ENCODE measurements at regions of chr12 and their contacts with region 1.

Region 1: DNA sequence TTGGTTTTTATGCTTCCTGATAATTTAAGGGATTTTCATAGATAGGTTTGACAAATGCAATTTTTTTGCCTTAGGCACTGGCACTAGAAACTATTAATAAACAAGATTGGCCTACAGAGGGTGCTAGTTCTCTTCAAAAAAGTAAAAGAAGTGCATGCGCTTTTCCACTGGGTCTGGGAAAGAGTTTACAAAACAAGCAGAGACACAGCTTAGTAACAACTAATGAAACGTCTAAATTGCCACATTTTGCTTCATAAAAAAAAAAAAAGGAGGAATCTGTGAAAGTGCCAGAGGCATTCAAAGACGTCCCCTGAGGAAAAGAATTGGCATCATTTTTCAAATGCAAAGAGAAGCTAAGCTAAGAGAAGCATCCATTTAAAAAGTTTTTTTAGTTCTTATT is 58.3 kb upstream of the EEA1 start:
- DNase-seq: no peak
- ATAC-seq: peak; percentile 80 to 96 (median 88)
- H3K4me3 ChIP-seq: peak overlapping the region; percentile 23
- H3K27ac ChIP-seq: peak overlapping the region; percentile 72
- H3K4me1 ChIP-seq: peaks cover 12% of the 10 kb centered on the region
- H3K27me3 ChIP-seq: no peaks in the 10 kb centered on the region
- CTCF ChIP-seq: peak; percentile 63

Region 2: DNA sequence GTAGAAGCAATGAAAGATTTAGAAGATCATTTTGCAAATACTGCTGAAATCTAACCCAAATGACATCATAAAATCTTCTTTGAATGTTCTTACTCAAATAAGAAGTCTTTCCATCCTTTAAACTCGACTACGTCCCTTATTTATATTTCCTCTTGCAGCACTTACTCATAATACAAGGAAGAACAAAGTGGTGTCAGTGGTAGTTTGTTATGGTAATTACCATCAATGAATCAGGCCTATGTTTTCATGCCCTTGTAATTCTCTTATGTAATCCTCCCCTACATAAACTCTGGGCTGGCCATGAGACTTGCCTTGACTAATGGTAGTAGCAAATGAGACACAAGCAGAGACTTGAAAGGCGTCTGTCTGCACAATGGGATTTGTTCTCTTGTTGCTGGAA is 75.3 kb before region 1 on chr12:
- intact Hi-C with region 1: no loop called
- DNase-seq: no peak
- ATAC-seq: peak; percentile 66 to 82 (median 70)
- H3K4me3 ChIP-seq: no peak overlapping the region
- H3K27ac ChIP-seq: no peak overlapping the region
- H3K4me1 ChIP-seq: peaks cover 42% of the 10 kb centered on the region
- H3K27me3 ChIP-seq: no peaks in the 10 kb centered on the region
- CTCF ChIP-seq: no peak

Region 3: DNA sequence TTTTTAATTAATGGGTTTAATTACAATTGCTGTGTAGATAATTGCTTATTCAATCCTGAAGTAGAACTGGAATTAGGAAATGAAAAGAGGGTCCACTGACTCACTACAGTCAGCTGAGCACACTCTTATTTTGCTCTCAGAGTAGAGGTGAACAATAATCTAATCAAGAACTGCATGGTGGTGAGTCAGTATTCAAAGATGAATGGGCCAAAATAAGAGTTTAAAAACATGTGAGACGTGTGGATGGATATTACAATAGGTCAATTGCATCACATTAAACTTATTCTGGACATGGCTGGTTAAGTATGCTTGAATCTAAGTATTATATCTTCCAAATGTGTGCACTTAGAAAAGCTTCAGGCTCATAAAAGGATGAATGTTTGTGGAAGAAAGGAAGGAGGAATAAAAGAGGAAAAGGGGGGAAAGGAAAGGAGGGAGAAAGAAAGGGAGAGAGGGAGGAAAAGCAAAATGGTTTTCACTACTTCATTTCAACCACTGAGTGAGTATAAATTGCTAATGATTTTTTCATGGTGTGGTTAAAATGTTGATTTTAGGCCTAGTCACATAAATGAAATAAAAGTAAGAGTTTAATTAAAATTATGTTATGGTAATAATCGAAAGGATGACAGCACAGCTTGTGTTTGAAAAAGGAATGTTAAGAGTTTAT is 31.2 kb before region 1 on chr12:
- intact Hi-C with region 1: no loop called
- DNase-seq: no peak
- ATAC-seq: no peak
- H3K4me3 ChIP-seq: no peak overlapping the region
- H3K27ac ChIP-seq: no peak overlapping the region
- H3K4me1 ChIP-seq: no peaks in the 10 kb centered on the region
- H3K27me3 ChIP-seq: no peaks in the 10 kb centered on the region
- CTCF ChIP-seq: no peak

Region 4: DNA sequence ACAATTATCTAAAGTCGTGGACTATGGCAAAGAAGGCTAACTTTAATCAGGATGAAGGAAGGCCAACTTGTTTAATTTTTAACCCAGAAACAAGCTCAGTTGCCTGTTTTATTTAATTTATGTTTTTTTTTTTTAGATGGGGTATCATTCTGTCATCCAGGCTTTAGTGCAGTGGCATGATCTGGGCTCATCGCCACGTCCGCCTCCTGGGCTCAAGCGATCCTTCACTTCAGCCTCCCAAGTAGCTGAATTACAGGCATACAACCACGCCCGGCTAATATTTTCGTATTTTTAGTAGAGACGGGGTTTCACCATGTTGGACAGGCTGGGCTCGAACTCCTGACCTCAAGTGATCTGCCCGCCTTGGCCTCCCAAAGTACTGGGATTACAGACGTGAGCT is 410.1 kb after region 1 on chr12:
- intact Hi-C with region 1: loop called in 1 of 2 experiments (anchors 2 kb)
- DNase-seq: no peak
- ATAC-seq: no peak
- H3K4me3 ChIP-seq: no peak overlapping the region
- H3K27ac ChIP-seq: peak overlapping the region; percentile 53
- H3K4me1 ChIP-seq: peaks cover 25% of the 10 kb centered on the region
- H3K27me3 ChIP-seq: no peaks in the 10 kb centered on the region
- CTCF ChIP-seq: no peak

Region 5: GRCh38 chr12:93407054-93407962 is 419.9 kb after region 1 on chr12:
- intact Hi-C with region 1: loop called in 1 of 2 experiments (anchors 5 kb)
- DNase-seq: no peak
- ATAC-seq: peak in 1 of 4 donors; percentile 26
- H3K4me3 ChIP-seq: no peak overlapping the region
- H3K27ac ChIP-seq: peak overlapping the region; percentile 18
- H3K4me1 ChIP-seq: peaks cover 32% of the 10 kb centered on the region
- H3K27me3 ChIP-seq: no peaks in the 10 kb centered on the region
- CTCF ChIP-seq: no peak

Region 6: DNA sequence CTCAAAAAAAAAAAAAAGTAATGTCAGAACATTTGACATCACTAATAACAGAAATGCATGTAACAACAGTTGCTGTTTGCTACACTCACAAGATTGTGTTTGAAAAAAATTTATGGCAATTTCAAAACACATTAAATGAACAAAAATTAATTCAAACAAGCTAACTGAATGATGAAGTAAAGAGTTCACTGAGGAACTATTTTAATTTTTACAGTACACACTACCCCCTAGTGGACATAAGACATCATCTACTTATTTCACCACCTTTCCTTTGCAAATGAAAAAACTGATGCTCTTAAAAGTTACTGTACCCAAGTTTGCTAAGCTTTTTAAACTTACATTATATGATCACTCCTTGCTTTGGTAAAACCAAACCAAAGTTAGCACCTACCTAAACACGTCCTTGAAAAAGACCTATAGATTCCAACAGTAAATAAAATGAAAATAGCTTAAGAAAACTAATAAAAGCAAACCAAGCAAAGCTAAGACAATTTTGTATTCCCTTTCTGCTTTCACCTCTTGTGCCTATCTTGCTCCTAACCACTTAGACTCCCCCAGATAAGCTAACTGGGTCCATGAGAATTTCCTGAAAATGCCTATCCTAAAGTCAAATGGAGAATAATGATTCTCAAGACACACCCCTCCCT is 432.1 kb after region 1 on chr12:
- intact Hi-C with region 1: loop called in 1 of 2 experiments (anchors 2 kb)
- DNase-seq: no peak
- ATAC-seq: peak; percentile 61 to 79 (median 72)
- H3K4me3 ChIP-seq: peak overlapping the region; percentile 13
- H3K27ac ChIP-seq: peak overlapping the region; percentile 76
- H3K4me1 ChIP-seq: peaks cover 81% of the 10 kb centered on the region
- H3K27me3 ChIP-seq: no peaks in the 10 kb centered on the region
- CTCF ChIP-seq: peak; percentile 75

Region 7: GRCh38 chr12:94101738-94102660 is 1114.6 kb after region 1 on chr12:
- intact Hi-C with region 1: loop called in 1 of 2 experiments (anchors 5 kb)
- DNase-seq: peak; percentile 82 to 89
- ATAC-seq: peak; percentile 83 to 92 (median 84)
- H3K4me3 ChIP-seq: peak overlapping the region; percentile 72
- H3K27ac ChIP-seq: no peak overlapping the region
- H3K4me1 ChIP-seq: peaks cover 6% of the 10 kb centered on the region
- H3K27me3 ChIP-seq: peaks cover 0 to 3% (median 0%) of the 10 kb centered on the region in 3 donors
- CTCF ChIP-seq: peak; percentile 84

Measured in psoas muscle (tissue), 8 donors.